ENCODE measurements at regions of chr15 and their contacts with region 1.

Region 1: DNA sequence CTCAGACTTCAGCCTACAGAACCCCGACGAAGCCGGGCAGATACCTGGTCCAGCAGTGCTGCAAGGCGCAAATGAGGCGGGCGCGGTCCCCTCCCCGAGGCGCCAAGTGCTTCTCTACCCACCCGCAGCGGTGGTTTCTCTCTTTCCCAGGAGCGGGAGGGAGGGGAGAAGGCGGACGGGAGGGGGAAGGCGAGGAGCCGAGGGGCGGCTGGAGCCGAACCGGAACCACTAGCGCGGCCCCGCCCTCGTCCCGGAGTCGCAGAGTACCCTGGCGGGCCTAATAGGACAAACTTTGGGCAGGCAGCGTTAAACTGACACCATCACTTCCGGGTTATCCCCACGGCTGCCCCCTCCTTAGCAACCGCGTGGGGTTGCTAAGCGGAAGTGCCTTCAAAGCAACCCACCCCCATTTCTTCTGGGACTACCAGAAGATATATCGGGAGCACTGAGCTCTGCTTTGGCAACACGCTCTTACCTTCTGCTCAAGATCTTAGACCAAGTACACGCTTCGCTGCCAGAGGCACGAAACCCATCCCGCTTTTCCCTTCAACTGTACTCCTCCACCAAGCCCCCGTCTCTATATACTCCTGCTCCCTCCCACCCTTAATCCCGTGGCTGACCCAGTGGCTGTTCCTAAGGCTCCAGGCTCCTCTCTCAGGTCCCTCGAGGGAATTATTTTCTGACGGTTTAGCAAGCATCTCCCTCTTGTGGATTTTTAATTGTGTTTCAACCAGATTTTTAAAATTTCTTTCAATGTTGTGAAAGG is at the start of gene CSNK1G1:
- DNase-seq: peak; percentile 93 to 99
- H3K4me3 ChIP-seq: peak within 1 kb of the TSS; percentile 95 to 99 (median 98)
- H3K27ac ChIP-seq: peak within 1 kb of the TSS; percentile 69 to 91 (median 82)
- H3K4me1 ChIP-seq: peaks cover 11 to 36% (median 19%) of the 10 kb centered on the region in 4 donors
- H3K27me3 ChIP-seq: no peaks in the 10 kb centered on the region
- CTCF ChIP-seq: peak in 3 of 7 experiments; percentile 18 to 30 (median 23)
- EP300 ChIP-seq: no peak
- POLR2A ChIP-seq: no peak
- total RNA-seq, gene CSNK1G1: 4.1 to 63.1 (median 11.0) TPM

Region 2: GRCh38 chr15:64209680-64210334 is 146.3 kb before region 1 on chr15:
- intact Hi-C with region 1: loop called (anchors 10 kb)
- DNase-seq: peak in 1 of 2 donors; percentile 74
- H3K4me3 ChIP-seq: no peak overlapping the region
- H3K27ac ChIP-seq: no peak overlapping the region
- H3K4me1 ChIP-seq: no peaks in the 10 kb centered on the region
- H3K27me3 ChIP-seq: no peaks in the 10 kb centered on the region
- CTCF ChIP-seq: peak in 4 of 7 experiments; percentile 23 to 30 (median 24)
- EP300 ChIP-seq: no peak
- POLR2A ChIP-seq: no peak

Region 3: GRCh38 chr15:64430000-64430735 is 74.0 kb after region 1 on chr15:
- intact Hi-C with region 1: no loop called
- DNase-seq: peak in 1 of 2 donors; percentile 82
- H3K4me3 ChIP-seq: no peak overlapping the region
- H3K27ac ChIP-seq: peak overlapping the region in 3 of 5 donors; percentile 40 to 53 (median 49)
- H3K4me1 ChIP-seq: peaks cover 0 to 17% (median 6%) of the 10 kb centered on the region in 4 donors
- H3K27me3 ChIP-seq: no peaks in the 10 kb centered on the region
- CTCF ChIP-seq: no peak
- EP300 ChIP-seq: no peak
- POLR2A ChIP-seq: no peak